PC-9 (cell line): ENCODE measurements at regions of chr20 and their contacts with region 1.

Region 1: DNA sequence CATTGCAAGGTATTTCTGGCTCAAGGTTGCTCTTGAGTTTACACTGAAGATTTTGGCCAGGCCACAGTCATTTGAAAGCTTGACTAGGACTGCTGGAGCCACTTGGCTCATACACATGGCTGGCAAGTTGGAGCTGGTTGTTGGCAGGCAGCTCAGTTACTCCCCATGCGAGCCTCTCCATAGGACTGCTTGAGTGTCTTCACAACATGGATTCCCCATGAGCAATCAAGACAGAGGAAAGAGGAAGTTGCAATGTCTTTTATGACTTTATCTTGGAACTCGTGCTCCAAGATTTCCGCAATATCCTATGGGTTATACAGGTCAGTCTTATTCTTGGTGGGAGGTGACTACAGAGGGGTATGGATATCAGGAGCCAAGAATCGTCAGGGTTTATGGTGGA is 1.4 kb upstream of the MANBAL start:
- DNase-seq: no peak
- H3K4me3 ChIP-seq: no peak overlapping the region
- H3K27ac ChIP-seq: no peak overlapping the region
- H3K4me1 ChIP-seq: peaks cover 10% of the 10 kb centered on the region; the same call in 1 of the 2 replicates
- H3K27me3 ChIP-seq: no peaks in the 10 kb centered on the region
- CTCF ChIP-seq: no peak

Region 2: GRCh38 chr20:37251825-37252477 is 36.1 kb before region 1 on chr20:
- CTCF ChIA-PET with region 1: no interaction called
- POLR2A ChIA-PET with region 1: no interaction called
- intact Hi-C with region 1: no loop called
- DNase-seq: no peak
- H3K4me3 ChIP-seq: no peak overlapping the region
- H3K27ac ChIP-seq: no peak overlapping the region
- H3K4me1 ChIP-seq: no peaks in the 10 kb centered on the region
- H3K27me3 ChIP-seq: peaks cover 19% of the 10 kb centered on the region
- CTCF ChIP-seq: no peak

Region 3: DNA sequence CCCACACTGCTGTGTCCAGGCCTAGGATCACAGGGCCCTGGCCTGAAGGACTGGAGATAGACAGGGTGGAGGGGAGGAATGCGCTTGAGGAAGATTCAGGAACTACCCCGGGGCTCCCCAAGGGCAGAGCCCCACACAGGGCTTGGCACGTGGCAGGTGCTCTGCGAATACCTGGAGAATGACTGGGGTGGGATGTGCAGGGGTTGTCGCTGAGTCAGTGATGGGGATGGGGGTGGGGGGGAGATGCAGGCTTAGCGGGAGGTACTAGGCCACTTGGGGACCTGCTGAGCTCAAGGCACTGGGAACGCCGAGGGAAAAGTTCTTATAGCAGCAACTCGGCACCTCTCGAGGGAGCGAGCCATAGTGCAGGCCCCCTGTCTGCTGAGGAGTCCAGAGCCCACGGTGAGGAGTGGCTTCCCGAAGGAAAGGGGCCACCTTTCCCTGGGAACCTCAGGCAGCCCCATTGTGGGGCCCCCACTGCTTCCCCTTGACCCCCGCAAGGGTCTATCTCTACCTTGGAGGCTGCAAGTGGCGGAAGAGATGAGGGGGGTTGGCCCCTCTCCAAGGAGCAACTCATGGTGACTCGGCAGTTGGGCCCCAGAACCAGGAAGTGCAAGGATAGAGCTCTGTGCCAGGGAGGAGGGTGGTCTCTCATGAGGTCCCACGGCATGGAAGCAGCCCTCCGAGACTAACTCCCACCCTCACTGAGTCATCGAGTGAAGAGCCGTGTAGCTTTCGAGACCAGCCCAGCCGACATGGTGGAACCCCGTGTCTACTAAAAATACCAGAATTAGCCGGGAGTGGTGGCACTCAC is 90.9 kb after region 1 on chr20:
- CTCF ChIA-PET with region 1: interaction called, 15 read pairs
- POLR2A ChIA-PET with region 1: interaction called, 3 read pairs
- intact Hi-C with region 1: loop called (anchors 2 kb)
- DNase-seq: peak in 1 of 2 experiments; percentile 72
- H3K4me3 ChIP-seq: no peak overlapping the region
- H3K27ac ChIP-seq: peak overlapping the region; percentile 60
- H3K4me1 ChIP-seq: peaks cover 21% of the 10 kb centered on the region
- H3K27me3 ChIP-seq: no peaks in the 10 kb centered on the region
- CTCF ChIP-seq: no peak